Activated CD4-positive, alpha-beta T cell treated with anti-CD3 and anti-CD28 coated beads for 36 hours (primary cell): ENCODE measurements at regions of chr6 and their contacts with region 1.

Region 1: GRCh38 chr6:34145161-34146020 is 496 bp downstream of the GRM4 start:
- DNase-seq: peak; percentile 37
- ATAC-seq: peak; percentile 23
- H3K4me3 Mint-ChIP-seq: peak overlapping the region; percentile 38
- H3K27ac Mint-ChIP-seq: no peak overlapping the region
- H3K4me1 Mint-ChIP-seq: peaks cover 14% of the 10 kb centered on the region
- H3K27me3 Mint-ChIP-seq: peaks cover 55% of the 10 kb centered on the region

Region 2: GRCh38 chr6:33840048-33840926 is 305.1 kb before region 1 on chr6:
- CTCF ChIA-PET with region 1: no interaction called
- POLR2A ChIA-PET with region 1: no interaction called
- intact Hi-C with region 1: loop called in 1 of 2 experiments (anchors 10 kb)
- DNase-seq: peak; percentile 68
- ATAC-seq: peak; percentile 98
- H3K4me3 Mint-ChIP-seq: no peak overlapping the region
- H3K27ac Mint-ChIP-seq: peak overlapping the region; percentile 11
- H3K4me1 Mint-ChIP-seq: peaks cover 15% of the 10 kb centered on the region
- H3K27me3 Mint-ChIP-seq: no peaks in the 10 kb centered on the region